Dorsolateral prefrontal cortex (tissue), 120 donors: ENCODE measurements at regions of chr15 and their contacts with region 1.

Region 1: DNA sequence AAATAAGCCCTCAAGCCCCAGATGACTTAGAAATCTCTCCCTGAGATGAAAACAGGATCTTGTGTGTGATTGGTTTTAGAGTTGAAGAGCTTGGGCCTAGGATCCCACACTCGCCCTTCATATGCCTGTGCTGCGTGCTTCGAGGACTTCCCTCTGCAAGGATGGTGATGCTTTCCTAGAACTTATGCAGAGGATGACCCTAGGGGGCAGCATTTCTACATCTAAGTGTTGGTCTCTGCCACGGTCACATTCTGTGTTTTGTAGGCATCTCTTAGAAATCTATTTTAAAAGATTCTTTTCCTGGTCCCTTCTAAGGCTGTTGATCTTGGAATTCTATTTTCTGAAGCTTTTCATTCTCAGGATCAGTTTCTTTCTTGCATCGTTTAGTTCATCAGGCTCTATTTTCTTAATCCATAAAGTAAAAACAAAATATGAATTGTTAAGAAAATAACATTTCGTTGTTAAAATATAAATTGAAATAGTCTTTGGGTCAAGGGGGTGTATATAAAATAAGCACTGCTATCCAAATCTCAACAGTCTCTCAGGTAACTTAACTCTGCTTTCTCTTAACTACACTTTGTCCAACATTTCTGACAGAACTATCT is 45.7 kb downstream of the WDR76 start:
- DNase-seq: peak in 8 of 10 donors; percentile 35 to 81 (median 61)
- H3K4me3 ChIP-seq: no peak overlapping the region
- H3K27ac ChIP-seq: peak overlapping the region in 43 of 59 donors; percentile 0 to 75 (median 50)
- H3K27me3 ChIP-seq: no peaks in the 10 kb centered on the region
- CTCF ChIP-seq: peak; percentile 40 to 89 (median 74)

Region 2: DNA sequence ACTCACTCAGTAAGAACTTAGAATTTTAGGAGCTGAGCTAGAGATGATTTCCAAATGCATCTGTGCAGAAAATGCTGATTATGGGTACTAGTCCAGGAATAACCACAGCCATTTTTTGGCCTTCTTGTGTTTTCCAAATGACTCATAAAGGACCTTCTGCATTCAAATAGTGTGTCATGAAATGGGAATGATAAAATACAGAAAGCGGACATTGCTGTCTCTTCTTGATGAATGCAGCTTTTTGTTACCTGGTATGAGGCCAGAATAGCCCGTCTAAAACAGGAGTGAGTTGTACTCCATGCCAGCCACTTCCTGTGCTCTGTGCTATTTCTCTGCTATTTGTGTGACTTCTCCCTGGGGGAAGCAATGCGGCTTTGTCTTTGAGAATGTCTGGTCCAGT is 343.1 kb after region 1 on chr15:
- intact Hi-C with region 1: loop called in 1 of 2 experiments (anchors 5 kb)
- DNase-seq: no peak
- H3K4me3 ChIP-seq: no peak overlapping the region
- H3K27ac ChIP-seq: peak overlapping the region in 27 of 59 donors; percentile 1 to 72 (median 21)
- H3K27me3 ChIP-seq: no peaks in the 10 kb centered on the region
- CTCF ChIP-seq: no peak